ENCODE measurements at regions of chr11 and their contacts with region 1.

Region 1: GRCh38 chr11:100141201-100141600 is 545.9 kb upstream of the ARHGAP42 start:
- DNase-seq: no peak
- ATAC-seq: no peak
- H3K4me3 ChIP-seq: no peak overlapping the region
- H3K4me3 Mint-ChIP-seq: no peak overlapping the region
- H3K27ac ChIP-seq: no peak overlapping the region
- H3K27ac Mint-ChIP-seq: no peak overlapping the region
- H3K4me1 ChIP-seq: no peaks in the 10 kb centered on the region
- H3K4me1 Mint-ChIP-seq: no peaks in the 10 kb centered on the region
- H3K27me3 ChIP-seq: no peaks in the 10 kb centered on the region
- H3K27me3 Mint-ChIP-seq: no peaks in the 10 kb centered on the region
- CTCF ChIP-seq: no peak

Region 2: DNA sequence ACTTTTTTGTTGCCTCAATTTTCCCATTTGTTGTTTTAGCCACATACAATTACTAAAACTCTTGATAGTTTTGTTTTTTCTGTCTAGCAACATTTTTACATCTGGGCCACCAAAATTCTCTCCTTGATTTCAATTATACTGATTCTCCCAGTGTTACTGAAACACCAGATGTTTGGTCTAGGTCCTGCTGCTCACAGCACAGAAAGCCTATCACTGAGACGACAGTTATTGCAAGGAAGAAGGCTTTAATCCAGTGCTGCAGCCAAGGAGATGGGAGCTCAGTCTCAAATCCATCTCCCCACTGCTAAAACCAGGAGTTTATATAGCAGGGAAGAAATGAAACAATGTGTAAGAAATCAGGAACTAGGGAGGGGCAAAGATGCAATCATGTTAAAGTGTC is 1958.2 kb before region 1 on chr11:
- CTCF ChIA-PET with region 1: no interaction called
- POLR2A ChIA-PET with region 1: no interaction called
- intact Hi-C with region 1: no loop called
- DNase-seq: no peak
- ATAC-seq: no peak
- H3K4me3 ChIP-seq: no peak overlapping the region
- H3K4me3 Mint-ChIP-seq: no peak overlapping the region
- H3K27ac ChIP-seq: no peak overlapping the region
- H3K27ac Mint-ChIP-seq: no peak overlapping the region
- H3K4me1 ChIP-seq: no peaks in the 10 kb centered on the region
- H3K4me1 Mint-ChIP-seq: no peaks in the 10 kb centered on the region
- H3K27me3 ChIP-seq: no peaks in the 10 kb centered on the region
- H3K27me3 Mint-ChIP-seq: no peaks in the 10 kb centered on the region
- CTCF ChIP-seq: no peak

Region 3: GRCh38 chr11:100072131-100072530 is 69.1 kb before region 1 on chr11:
- CTCF ChIA-PET with region 1: no interaction called
- POLR2A ChIA-PET with region 1: no interaction called
- intact Hi-C with region 1: no loop called
- DNase-seq: no peak
- ATAC-seq: no peak
- H3K4me3 ChIP-seq: no peak overlapping the region
- H3K4me3 Mint-ChIP-seq: no peak overlapping the region
- H3K27ac ChIP-seq: no peak overlapping the region
- H3K27ac Mint-ChIP-seq: no peak overlapping the region
- H3K4me1 ChIP-seq: no peaks in the 10 kb centered on the region
- H3K4me1 Mint-ChIP-seq: no peaks in the 10 kb centered on the region
- H3K27me3 ChIP-seq: no peaks in the 10 kb centered on the region
- H3K27me3 Mint-ChIP-seq: no peaks in the 10 kb centered on the region
- CTCF ChIP-seq: no peak

Region 4: DNA sequence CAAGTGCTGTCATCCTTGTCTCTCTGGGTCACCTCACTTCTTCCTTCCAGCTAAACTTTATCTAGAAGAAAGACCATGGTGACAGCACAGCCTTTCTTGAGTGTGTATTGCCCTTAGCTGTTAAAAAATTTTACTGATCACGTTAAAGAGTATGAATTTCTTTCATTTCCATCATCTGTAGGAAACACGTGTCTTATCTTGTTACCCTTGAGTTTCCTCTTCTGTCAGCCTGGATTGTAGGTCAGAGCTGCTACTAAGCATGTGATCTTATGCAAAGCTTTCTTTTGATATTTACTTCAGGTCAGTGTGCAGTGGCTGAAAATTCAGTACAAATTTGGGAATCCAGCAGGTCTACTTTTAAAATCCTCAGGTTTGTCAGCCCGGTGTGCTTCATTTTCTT is 33.7 kb after region 1 on chr11:
- CTCF ChIA-PET with region 1: no interaction called
- POLR2A ChIA-PET with region 1: no interaction called
- intact Hi-C with region 1: no loop called
- DNase-seq: no peak
- ATAC-seq: no peak
- H3K4me3 ChIP-seq: no peak overlapping the region
- H3K4me3 Mint-ChIP-seq: no peak overlapping the region
- H3K27ac ChIP-seq: no peak overlapping the region
- H3K27ac Mint-ChIP-seq: no peak overlapping the region
- H3K4me1 ChIP-seq: no peaks in the 10 kb centered on the region
- H3K4me1 Mint-ChIP-seq: no peaks in the 10 kb centered on the region
- H3K27me3 ChIP-seq: no peaks in the 10 kb centered on the region
- H3K27me3 Mint-ChIP-seq: no peaks in the 10 kb centered on the region
- CTCF ChIP-seq: no peak

Region 5: GRCh38 chr11:100203789-100204188 is 62.6 kb after region 1 on chr11:
- CTCF ChIA-PET with region 1: no interaction called
- POLR2A ChIA-PET with region 1: no interaction called
- intact Hi-C with region 1: loop called in 1 of 2 experiments (anchors 2 kb)
- DNase-seq: no peak
- ATAC-seq: no peak
- H3K4me3 ChIP-seq: no peak overlapping the region
- H3K4me3 Mint-ChIP-seq: no peak overlapping the region
- H3K27ac ChIP-seq: no peak overlapping the region
- H3K27ac Mint-ChIP-seq: no peak overlapping the region
- H3K4me1 ChIP-seq: no peaks in the 10 kb centered on the region
- H3K4me1 Mint-ChIP-seq: no peaks in the 10 kb centered on the region
- H3K27me3 ChIP-seq: no peaks in the 10 kb centered on the region
- H3K27me3 Mint-ChIP-seq: no peaks in the 10 kb centered on the region
- CTCF ChIP-seq: no peak

Region 6: GRCh38 chr11:100221791-100222190 is 80.6 kb after region 1 on chr11:
- CTCF ChIA-PET with region 1: no interaction called
- POLR2A ChIA-PET with region 1: no interaction called
- intact Hi-C with region 1: no loop called
- DNase-seq: no peak
- ATAC-seq: no peak
- H3K4me3 ChIP-seq: no peak overlapping the region
- H3K4me3 Mint-ChIP-seq: no peak overlapping the region
- H3K27ac ChIP-seq: no peak overlapping the region
- H3K27ac Mint-ChIP-seq: no peak overlapping the region
- H3K4me1 ChIP-seq: no peaks in the 10 kb centered on the region
- H3K4me1 Mint-ChIP-seq: no peaks in the 10 kb centered on the region
- H3K27me3 ChIP-seq: no peaks in the 10 kb centered on the region
- H3K27me3 Mint-ChIP-seq: no peaks in the 10 kb centered on the region
- CTCF ChIP-seq: no peak